ENCODE measurements at regions of chr1 and their contacts with region 1.

Region 1: DNA sequence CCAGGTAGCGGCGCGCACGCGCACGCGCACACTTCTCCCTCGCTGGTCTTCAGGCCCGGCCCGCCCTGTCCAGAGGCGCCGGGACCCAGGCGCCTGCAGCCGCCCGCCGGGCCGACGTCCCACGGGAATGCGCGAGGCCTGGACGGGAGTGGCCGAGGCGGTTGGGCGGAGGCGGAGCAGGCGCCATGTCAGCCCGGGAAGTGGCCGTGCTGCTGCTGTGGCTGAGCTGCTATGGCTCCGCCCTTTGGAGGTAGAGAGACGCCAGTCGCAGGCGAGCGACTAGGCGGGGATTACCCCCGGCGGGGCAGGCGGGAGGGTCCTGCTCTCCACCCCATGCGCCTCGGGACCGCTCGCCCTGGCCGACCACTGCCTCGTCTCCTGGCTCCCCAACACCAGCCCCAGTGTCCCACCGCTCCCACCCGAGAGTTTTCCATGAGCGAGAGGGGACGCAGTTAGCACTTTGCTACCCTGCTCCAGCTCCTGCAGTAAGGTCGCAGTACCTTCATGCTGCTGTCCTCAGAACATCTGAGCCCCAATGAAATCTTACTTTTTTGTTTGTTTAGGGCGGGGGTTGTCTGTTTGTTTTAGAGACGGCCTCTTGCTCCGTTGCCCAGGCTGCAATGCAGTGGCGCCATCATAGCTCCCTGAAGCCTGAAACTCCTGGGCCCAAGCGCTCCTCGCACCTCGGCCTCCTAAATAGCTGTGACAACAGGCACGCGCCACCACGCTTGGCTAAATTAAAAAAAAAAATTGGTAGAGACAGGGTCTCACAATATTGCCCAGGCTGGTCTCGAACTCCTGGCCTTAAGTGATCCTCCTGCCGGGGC is at the start of gene CATSPERE:
- DNase-seq: peak; percentile 95
- H3K4me3 ChIP-seq: peak within 1 kb of the TSS; percentile 58
- H3K4me3 Mint-ChIP-seq: peak within 1 kb of the TSS; percentile 68
- H3K27ac Mint-ChIP-seq: peak within 1 kb of the TSS; percentile 85
- H3K4me1 ChIP-seq: peaks cover 44% of the 10 kb centered on the region
- H3K4me1 Mint-ChIP-seq: peaks cover 28% of the 10 kb centered on the region
- H3K27me3 ChIP-seq: no peaks in the 10 kb centered on the region
- H3K27me3 Mint-ChIP-seq: no peaks in the 10 kb centered on the region
- CTCF ChIP-seq: no peak
- total RNA-seq, gene CATSPERE: 0.14 and 0.79 TPM in 2 replicates

Region 2: DNA sequence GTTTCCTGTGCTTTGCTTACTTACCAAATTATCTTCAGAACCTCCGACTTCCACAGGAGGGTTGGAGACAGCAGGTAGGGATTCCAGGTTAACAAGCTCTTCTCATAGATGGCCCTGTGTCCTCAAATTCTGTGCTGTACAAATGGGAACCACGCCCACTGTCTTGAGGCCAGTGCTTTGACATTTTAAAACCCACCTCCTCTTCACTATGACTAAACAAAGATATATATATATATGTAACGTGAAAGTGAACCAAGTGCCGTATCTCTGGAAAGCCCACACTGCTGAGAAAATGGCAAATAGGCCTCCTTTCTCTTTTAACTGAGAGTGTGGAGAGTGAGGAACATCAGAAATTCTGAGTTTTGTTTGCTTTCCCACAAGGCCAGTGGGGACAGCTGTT is 310.8 kb before region 1 on chr1:
- CTCF ChIA-PET with region 1: no interaction called
- POLR2A ChIA-PET with region 1: no interaction called
- intact Hi-C with region 1: no loop called
- DNase-seq: no peak
- H3K4me3 ChIP-seq: no peak overlapping the region
- H3K4me3 Mint-ChIP-seq: no peak overlapping the region
- H3K27ac Mint-ChIP-seq: no peak overlapping the region
- H3K4me1 ChIP-seq: no peaks in the 10 kb centered on the region
- H3K4me1 Mint-ChIP-seq: no peaks in the 10 kb centered on the region
- H3K27me3 ChIP-seq: no peaks in the 10 kb centered on the region
- H3K27me3 Mint-ChIP-seq: no peaks in the 10 kb centered on the region
- CTCF ChIP-seq: no peak

Region 3: GRCh38 chr1:244391761-244392160 is 69.7 kb before region 1 on chr1:
- CTCF ChIA-PET with region 1: no interaction called
- POLR2A ChIA-PET with region 1: no interaction called
- intact Hi-C with region 1: no loop called
- DNase-seq: peak; percentile 39 to 62
- H3K4me3 ChIP-seq: no peak overlapping the region
- H3K4me3 Mint-ChIP-seq: no peak overlapping the region
- H3K27ac Mint-ChIP-seq: peak overlapping the region; percentile 69
- H3K4me1 ChIP-seq: peaks cover 20% of the 10 kb centered on the region
- H3K4me1 Mint-ChIP-seq: peaks cover 9% of the 10 kb centered on the region
- H3K27me3 ChIP-seq: no peaks in the 10 kb centered on the region
- H3K27me3 Mint-ChIP-seq: no peaks in the 10 kb centered on the region
- CTCF ChIP-seq: no peak

Region 4: GRCh38 chr1:244419024-244419423 is 42.4 kb before region 1 on chr1:
- CTCF ChIA-PET with region 1: no interaction called
- POLR2A ChIA-PET with region 1: no interaction called
- intact Hi-C with region 1: no loop called
- DNase-seq: no peak
- H3K4me3 ChIP-seq: no peak overlapping the region
- H3K4me3 Mint-ChIP-seq: no peak overlapping the region
- H3K27ac Mint-ChIP-seq: no peak overlapping the region
- H3K4me1 ChIP-seq: no peaks in the 10 kb centered on the region
- H3K4me1 Mint-ChIP-seq: no peaks in the 10 kb centered on the region
- H3K27me3 ChIP-seq: no peaks in the 10 kb centered on the region
- H3K27me3 Mint-ChIP-seq: no peaks in the 10 kb centered on the region
- CTCF ChIP-seq: no peak

Region 5: DNA sequence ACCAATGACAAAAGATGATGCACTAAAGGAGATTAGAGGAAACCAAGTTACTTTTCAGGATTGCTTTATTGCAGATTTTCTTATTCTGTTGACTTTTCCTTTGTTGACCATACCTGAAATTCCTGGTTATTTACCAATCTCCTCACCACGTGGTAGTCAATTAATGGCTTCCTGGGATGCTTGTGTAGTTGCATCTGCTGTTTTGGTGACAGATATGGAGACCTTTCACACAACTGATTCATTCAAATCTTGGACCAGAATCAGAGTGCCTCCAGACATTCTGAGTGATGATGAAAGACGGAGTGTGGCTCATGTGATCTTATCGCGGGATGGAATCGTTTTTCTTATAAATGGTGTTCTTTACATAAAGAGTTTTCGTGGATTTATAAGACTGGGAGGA is 90.9 kb after region 1 on chr1:
- CTCF ChIA-PET with region 1: no interaction called
- POLR2A ChIA-PET with region 1: no interaction called
- intact Hi-C with region 1: loop called (anchors 2 kb)
- DNase-seq: peak in 1 of 2 experiments; percentile 43
- H3K4me3 ChIP-seq: no peak overlapping the region
- H3K4me3 Mint-ChIP-seq: no peak overlapping the region
- H3K27ac Mint-ChIP-seq: peak overlapping the region; percentile 13
- H3K4me1 ChIP-seq: peaks cover 10% of the 10 kb centered on the region
- H3K4me1 Mint-ChIP-seq: peaks cover 13% of the 10 kb centered on the region
- H3K27me3 ChIP-seq: no peaks in the 10 kb centered on the region
- H3K27me3 Mint-ChIP-seq: no peaks in the 10 kb centered on the region
- CTCF ChIP-seq: no peak

Region 6: DNA sequence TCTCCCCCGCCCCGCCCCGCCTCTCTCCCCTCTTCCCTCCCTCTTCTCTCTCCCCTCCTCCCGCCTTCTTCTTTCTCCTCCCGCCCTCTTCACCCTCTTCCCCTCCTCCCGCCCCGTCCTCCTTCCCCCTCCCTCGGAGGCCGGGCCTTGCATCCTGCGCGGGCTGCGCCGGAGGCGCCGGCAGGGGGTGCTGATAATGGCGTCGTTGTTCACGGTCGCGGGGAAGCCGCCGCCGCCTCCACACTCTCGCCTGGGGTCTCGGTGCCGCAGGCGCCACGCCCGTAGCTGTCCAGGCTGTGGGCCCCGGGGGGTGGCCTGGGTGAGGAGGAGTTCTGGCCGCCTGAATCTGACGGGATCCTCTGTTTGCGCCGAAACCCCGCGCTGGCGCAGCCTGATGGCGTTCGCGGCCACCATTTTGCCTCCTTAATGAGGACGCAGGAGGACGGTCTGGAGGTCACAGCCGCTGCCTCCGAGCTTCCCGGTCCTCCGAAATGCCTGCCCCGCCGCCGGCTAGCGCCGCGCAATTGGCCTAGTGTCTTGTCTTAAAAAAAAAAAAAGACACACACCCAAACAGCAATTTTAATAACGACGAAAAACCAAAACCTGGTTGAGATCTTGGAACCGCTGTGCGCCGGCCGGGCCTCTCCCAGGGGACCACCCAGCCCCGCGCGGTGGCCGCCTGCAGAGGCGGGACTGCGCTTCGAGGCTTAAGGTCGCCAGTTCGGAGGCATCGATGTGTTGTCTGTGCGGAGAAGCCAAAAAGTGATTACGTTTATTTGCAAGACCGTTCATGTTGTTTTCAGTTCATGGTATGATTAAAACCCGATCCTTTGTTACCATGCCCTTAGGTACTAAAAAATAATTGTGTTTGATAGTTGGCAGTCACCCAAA is 509.4 kb after region 1 on chr1:
- CTCF ChIA-PET with region 1: no interaction called
- POLR2A ChIA-PET with region 1: no interaction called
- intact Hi-C with region 1: loop called (anchors 2 kb)
- DNase-seq: peak; percentile 97
- H3K4me3 ChIP-seq: peak overlapping the region; percentile 82
- H3K4me3 Mint-ChIP-seq: peak overlapping the region; percentile 91
- H3K27ac Mint-ChIP-seq: peak overlapping the region; percentile 99
- H3K4me1 ChIP-seq: peaks cover 16% of the 10 kb centered on the region
- H3K4me1 Mint-ChIP-seq: peaks cover 20% of the 10 kb centered on the region
- H3K27me3 ChIP-seq: no peaks in the 10 kb centered on the region
- H3K27me3 Mint-ChIP-seq: no peaks in the 10 kb centered on the region
- CTCF ChIP-seq: peak; percentile 54 to 79

Region 7: DNA sequence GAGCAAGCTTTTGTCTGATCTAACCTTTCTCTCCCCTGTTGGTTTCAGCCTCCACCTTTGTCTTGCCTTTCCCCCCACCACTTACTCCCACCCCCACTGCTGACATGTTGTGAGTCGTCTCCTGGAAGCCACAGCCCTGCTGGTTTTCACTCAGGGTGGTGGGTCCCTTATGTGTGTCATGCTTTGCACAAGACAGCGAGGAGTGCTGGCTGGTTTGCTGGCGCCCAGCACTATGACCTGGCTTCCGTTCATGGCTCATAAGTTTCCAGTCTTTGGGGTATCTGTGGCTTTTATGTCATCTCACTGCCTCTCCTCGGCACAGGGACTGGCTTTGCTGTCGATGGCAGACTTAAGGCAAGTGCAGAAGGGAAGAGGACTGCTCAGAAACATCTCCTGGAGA is 871.1 kb after region 1 on chr1:
- CTCF ChIA-PET with region 1: no interaction called
- POLR2A ChIA-PET with region 1: no interaction called
- intact Hi-C with region 1: no loop called
- DNase-seq: no peak
- H3K4me3 ChIP-seq: no peak overlapping the region
- H3K4me3 Mint-ChIP-seq: no peak overlapping the region
- H3K27ac Mint-ChIP-seq: no peak overlapping the region
- H3K4me1 ChIP-seq: peaks cover 11% of the 10 kb centered on the region
- H3K4me1 Mint-ChIP-seq: peaks cover 13% of the 10 kb centered on the region
- H3K27me3 ChIP-seq: no peaks in the 10 kb centered on the region
- H3K27me3 Mint-ChIP-seq: no peaks in the 10 kb centered on the region
- CTCF ChIP-seq: no peak

Measured in Caco-2 (cell line).